GM10248 (cell line): ENCODE measurements at regions of chrX and their contacts with region 1.

Region 1: DNA sequence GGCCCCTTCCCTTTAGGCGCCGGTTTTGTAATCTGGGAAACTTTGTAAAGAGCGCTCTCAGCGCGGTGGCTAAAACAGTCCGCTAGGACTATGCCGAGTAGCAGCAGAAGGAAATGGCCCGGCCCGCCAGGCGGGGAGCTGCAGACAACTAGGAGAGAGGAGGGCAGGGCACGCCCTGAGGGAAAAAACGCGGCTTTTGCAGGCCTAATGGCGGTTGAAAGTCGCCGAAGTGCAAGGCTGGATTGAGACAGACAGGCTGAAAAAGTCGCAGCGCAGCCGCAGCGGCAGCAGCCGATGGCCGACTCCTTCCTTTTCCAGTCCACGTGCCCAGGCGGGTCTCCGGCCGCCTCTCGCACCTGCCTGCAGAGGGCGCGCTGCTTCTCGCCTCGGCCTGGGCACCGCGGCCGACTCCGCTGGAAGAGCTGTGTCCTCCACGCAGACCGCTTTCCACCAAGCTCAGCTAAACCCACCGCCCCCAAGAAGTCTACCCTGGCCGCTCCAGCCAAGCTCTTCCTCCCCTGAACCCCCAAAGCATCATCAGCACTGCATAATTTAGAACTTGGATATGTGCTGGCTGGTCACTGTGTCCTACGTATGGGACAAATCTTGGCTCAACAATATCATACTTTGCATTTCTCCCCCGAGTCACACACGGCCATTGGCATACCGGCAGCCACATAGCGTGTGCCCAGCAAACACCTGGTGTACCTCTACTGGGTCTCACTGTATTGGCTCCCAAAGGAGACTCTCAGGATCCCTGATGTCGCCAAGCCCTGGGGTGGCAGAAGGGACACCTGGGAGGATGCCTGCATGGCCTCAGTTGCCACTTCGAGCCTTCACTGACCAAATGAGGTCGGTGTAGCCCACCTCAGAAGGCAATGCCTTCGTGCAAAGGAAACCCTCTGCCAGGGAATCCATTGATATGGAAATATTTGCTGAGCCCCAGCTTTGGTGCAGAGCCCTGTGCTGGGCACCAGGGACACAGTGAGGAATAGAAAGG is 14.5 kb downstream of the SLC25A5 start:
- DNase-seq: peak; percentile 74
- CTCF ChIP-seq: peak; percentile 72

Region 2: GRCh38 chrX:119468930-119469635 is 13.7 kb before region 1 on chrX:
- CTCF ChIA-PET with region 1: interaction called, 45 read pairs
- POLR2A ChIA-PET with region 1: interaction called, 3 read pairs
- DNase-seq: peak; percentile 79
- CTCF ChIP-seq: peak; percentile 78

Region 3: DNA sequence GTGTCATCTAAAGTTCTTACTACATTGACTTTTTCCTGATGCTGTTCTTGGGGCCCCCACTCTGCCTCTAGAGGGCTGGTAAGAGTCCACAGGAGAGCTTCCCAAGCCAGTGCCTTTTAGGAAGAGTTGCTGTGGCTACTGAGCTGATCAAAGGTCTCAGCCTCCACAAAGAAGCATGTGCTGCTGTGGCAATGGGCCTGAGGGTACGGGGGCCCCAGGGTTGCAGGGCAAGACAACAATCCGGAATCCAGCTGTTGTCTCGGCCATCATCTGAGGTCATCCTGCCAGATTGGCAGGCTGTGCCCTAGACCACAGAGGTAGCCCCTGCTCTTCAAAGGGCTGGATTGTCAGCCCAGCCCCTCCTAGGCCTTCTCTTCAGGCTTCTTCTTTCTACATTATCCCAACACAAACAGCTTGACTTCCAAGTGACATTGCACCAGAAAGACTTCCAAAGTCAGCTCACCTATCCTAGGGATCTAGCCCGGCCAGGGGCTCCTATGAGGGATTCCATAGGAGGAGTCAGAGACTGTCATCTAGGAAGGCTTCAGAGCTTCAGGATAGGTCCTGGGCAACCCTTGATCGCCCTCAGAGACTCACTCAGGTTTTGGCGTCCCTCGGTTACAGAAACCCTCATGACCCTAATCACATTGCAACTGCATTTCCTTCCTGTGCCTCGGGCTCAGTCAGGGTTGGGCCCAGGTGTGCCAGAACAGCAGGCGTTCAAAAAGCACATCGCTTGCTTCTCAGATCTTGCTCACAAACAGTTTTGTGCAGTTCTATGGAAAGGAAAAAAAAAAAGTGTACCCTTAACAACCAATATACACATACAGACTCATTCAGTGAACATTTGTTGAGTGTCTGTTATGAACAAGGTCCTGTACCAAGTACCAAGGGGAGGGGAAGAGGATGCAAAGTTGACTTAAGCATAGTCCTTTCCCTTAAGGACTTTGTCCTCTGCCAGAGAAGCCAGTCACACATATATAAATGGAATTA is 13.2 kb after region 1 on chrX:
- CTCF ChIA-PET with region 1: interaction called, 55 read pairs
- POLR2A ChIA-PET with region 1: no interaction called
- DNase-seq: no peak
- CTCF ChIP-seq: no peak

Region 4: GRCh38 chrX:119552508-119552907 is 69.7 kb after region 1 on chrX:
- CTCF ChIA-PET with region 1: no interaction called
- POLR2A ChIA-PET with region 1: no interaction called
- DNase-seq: no peak
- CTCF ChIP-seq: no peak

Region 5: DNA sequence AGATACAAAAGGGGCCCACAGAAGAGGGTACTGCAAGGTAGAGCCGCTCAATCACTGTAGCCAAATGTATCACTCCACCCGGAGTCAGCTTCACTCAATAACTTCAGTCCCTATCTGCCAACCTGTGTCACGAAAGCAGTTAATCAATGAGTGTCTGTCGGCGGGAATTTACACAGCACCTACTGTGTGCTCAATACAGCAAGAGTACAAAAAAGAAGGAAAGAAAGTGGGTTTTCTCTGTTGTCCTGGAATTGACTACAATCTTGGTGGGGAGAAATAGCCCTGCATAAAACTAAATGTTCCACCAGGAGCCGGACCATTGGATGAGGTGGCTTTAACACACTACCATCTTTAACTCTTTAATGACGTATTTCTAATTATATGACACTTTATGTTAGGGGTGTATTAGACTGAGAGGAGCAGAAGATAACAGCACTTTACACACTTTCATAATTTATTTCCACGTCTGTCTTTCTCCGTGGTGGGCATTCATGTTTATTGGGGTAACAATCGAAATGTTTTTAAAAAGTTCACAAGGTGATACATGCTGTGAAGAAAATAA is 124.3 kb after region 1 on chrX:
- CTCF ChIA-PET with region 1: no interaction called
- POLR2A ChIA-PET with region 1: no interaction called
- DNase-seq: no peak
- CTCF ChIP-seq: no peak